ENCODE measurements at regions of chr7 and their contacts with region 1.

Region 1: DNA sequence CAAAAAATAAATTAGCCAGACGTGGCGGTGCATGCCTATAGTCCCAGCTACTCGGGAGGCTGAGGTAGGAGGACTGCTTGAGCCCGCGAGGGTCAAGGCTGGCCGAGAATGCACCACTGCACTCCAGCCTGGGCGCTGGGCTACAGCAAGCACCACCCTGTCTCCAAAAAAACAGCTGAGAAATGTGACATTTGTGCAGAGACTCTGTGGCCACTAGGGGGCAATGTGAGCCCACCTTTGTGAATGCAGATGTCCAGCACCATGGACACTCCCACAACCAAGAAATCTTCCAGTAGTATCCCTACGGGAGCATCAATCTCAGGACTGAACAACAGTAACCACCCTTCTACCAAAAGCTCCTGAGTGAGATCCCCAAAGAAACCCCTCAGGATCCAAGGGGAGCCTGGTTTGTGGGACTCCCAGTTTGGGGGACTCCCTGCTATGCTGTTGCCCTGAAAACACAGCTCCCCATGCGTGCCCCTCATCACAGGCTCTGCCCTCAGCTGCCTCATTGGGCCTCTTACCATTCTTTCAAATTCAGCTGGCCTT is 6.2 kb upstream of the AHCYL2 start:
- DNase-seq: peak; percentile 85 to 93 (median 88)
- ATAC-seq: peak; percentile 88 to 91
- H3K4me3 ChIP-seq: no peak overlapping the region
- H3K27ac ChIP-seq: no peak overlapping the region
- H3K4me1 ChIP-seq: no peaks in the 10 kb centered on the region
- H3K27me3 ChIP-seq: no peaks in the 10 kb centered on the region

Region 2: GRCh38 chr7:129072479-129073011 is 146.0 kb before region 1 on chr7:
- intact Hi-C with region 1: no loop called
- DNase-seq: no peak
- ATAC-seq: peak in 1 of 2 donors; percentile 18
- H3K4me3 ChIP-seq: no peak overlapping the region
- H3K27ac ChIP-seq: no peak overlapping the region
- H3K4me1 ChIP-seq: no peaks in the 10 kb centered on the region
- H3K27me3 ChIP-seq: no peaks in the 10 kb centered on the region

Region 3: DNA sequence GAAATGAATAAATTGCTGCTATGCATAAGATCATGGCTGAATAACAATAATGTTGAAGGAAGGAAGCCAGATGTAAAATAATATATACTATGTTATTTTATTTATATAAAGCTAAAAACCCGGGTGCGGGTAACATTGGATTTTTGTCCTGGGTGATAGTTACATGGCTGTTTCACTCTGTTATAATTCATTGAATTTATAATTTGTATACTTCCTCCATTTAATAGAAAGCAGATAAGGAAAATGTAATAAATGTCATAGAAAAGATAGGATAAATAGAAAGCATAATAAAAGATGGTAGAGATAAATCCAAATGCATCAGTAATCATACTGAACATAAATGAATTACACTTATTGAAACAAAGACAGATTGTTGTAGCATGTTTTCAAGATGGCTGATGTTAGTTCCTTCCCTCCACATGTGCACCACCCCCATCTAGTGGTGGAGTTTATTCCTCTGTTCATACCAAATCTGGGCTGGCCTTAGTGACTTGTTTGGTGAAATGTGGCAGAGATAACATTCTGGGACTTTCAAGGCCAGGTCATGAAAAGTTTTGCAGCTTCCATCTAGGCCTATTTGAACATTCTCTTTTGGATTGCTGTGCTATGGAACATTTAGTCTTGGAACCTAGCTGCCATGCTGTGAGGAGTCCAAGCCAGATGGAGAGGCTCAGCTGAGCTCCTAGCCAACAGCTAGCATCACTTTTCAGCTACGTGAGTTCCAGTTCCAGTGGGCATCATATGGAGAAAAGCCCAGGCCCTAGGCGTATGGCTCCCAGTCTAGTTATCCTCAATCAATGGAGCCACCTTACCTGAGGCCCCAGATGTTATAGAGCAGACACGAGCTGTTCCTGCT is 53.1 kb after region 1 on chr7:
- intact Hi-C with region 1: loop called in 2 of 4 experiments (anchors 2 to 10 kb)
- DNase-seq: no peak
- ATAC-seq: peak in 1 of 2 donors; percentile 71
- H3K4me3 ChIP-seq: no peak overlapping the region
- H3K27ac ChIP-seq: no peak overlapping the region
- H3K4me1 ChIP-seq: no peaks in the 10 kb centered on the region
- H3K27me3 ChIP-seq: no peaks in the 10 kb centered on the region

Region 4: DNA sequence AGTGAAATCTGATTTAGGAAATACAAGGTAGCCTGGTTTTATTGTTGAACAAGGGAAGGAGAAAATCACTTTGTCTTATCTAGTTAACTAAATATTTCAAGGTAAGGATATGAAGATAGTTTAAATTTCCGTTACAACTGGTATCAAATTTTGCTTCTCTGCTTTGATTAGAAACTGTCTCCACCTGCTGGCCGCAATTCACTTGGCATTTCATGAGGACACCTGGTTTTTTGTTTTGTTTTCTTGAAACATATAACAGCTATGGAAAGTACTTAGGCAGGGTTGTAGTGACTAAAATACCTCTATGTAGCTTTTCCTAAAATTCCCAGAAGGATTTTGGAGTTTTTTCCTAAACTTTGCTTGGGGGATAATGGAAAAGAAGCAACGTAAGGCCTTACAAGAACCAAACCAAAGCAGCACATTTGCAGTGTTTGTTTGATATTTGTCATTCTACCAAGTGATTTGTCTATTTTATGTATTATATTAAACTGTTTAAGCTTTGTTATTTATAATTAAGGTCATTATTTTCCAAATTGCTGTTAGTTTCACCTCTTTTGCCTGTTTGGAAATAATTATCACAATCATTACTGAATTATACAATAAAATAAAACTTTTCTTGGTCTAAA is 79.8 kb after region 1 on chr7:
- intact Hi-C with region 1: loop called in 3 of 4 experiments (anchors 5 to 10 kb)
- DNase-seq: peak in 2 of 3 donors; percentile 31 to 76
- ATAC-seq: no peak
- H3K4me3 ChIP-seq: no peak overlapping the region
- H3K27ac ChIP-seq: no peak overlapping the region
- H3K4me1 ChIP-seq: no peaks in the 10 kb centered on the region
- H3K27me3 ChIP-seq: no peaks in the 10 kb centered on the region

Region 5: GRCh38 chr7:129433847-129434674 is 215.5 kb after region 1 on chr7 and contains the start of gene STRIP2:
- intact Hi-C with region 1: no loop called
- DNase-seq: peak; percentile 95 to 98 (median 97)
- ATAC-seq: peak; percentile 99
- H3K4me3 ChIP-seq: peak within 1 kb of the TSS; percentile 78
- H3K27ac ChIP-seq: peak within 1 kb of the TSS; percentile 72
- H3K4me1 ChIP-seq: no peaks in the 10 kb centered on the region
- H3K27me3 ChIP-seq: no peaks in the 10 kb centered on the region
- total RNA-seq, gene STRIP2: 9.5 to 16.7 (median 13.8) TPM

Region 6: DNA sequence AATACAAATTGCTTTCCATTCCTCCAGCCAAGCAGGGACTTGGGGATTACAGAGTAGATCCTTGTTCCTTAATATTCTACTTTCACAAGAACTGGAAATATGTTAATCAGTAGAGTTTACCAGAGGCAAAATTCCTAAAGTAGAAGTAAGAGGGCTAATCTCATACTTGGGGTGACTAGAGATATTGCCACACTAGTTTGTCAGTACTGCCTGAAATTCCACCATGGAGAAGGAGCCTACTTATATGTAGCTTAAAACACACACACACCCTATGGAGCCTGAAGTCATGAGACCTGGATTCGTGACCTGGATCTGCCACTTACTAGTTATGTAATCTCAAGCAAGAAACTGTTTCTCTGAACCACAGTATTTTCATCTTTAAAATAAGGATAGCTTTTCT is 249.5 kb after region 1 on chr7:
- intact Hi-C with region 1: loop called in 3 of 4 experiments (anchors 5 to 10 kb)
- DNase-seq: no peak
- ATAC-seq: no peak
- H3K4me3 ChIP-seq: no peak overlapping the region
- H3K27ac ChIP-seq: no peak overlapping the region
- H3K4me1 ChIP-seq: no peaks in the 10 kb centered on the region
- H3K27me3 ChIP-seq: no peaks in the 10 kb centered on the region

Measured in right cardiac atrium (tissue), 5 donors.